H1 (cell line): ENCODE measurements at regions of chr5 and their contacts with region 1.

Region 1: DNA sequence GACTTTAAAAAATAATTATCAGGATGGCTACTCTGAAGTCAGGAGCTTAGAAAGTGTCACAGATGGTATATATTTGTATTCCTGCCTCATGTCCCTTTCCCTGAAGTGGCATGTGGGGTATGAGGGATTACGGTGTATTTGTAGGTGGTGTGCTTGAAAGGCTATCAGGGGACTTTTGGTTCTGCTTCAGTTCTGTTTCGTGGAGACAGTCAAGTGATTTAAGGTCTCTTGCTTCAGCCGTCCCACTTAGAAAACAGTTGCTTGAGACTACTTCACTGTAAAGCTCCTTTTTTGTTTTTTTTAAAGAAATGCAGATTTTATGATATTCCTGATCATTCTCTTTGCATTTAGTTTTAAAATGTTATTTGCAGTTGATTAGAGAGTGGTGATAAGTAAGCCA is 18.3 kb downstream of the PARP8 start:
- DNase-seq: no peak
- H3K4me3 ChIP-seq: no peak overlapping the region
- H3K27ac ChIP-seq: no peak overlapping the region
- H3K4me1 ChIP-seq: peaks cover 0 to 11% (median 3%) of the 10 kb centered on the region in 4 experiments; a peak in 3 of 7 replicates
- H3K27me3 ChIP-seq: no peaks in the 10 kb centered on the region
- CTCF ChIP-seq: no peak
- EP300 ChIP-seq: no peak
- POLR2A ChIP-seq: no peak
- RAD21 ChIP-seq: no peak

Region 2: GRCh38 chr5:50667653-50668595 is 16.8 kb before region 1 on chr5:
- CTCF ChIA-PET with region 1: no interaction called
- POLR2A ChIA-PET with region 1: interaction called, 10 read pairs
- DNase-seq: peak in 1 of 2 experiments; percentile 36
- H3K4me3 ChIP-seq: peak overlapping the region; percentile 70 to 86 (median 79)
- H3K27ac ChIP-seq: peak overlapping the region; percentile 97
- H3K4me1 ChIP-seq: peaks cover 0 to 9% (median 6%) of the 10 kb centered on the region in 4 experiments; a peak in 3 of 7 replicates
- H3K27me3 ChIP-seq: no peaks in the 10 kb centered on the region
- CTCF ChIP-seq: no peak
- EP300 ChIP-seq: peak in 1 of 2 experiments; percentile 70; a peak in 1 of 3 replicates
- POLR2A ChIP-seq: peak; percentile 64 to 75
- RAD21 ChIP-seq: no peak

Region 3: DNA sequence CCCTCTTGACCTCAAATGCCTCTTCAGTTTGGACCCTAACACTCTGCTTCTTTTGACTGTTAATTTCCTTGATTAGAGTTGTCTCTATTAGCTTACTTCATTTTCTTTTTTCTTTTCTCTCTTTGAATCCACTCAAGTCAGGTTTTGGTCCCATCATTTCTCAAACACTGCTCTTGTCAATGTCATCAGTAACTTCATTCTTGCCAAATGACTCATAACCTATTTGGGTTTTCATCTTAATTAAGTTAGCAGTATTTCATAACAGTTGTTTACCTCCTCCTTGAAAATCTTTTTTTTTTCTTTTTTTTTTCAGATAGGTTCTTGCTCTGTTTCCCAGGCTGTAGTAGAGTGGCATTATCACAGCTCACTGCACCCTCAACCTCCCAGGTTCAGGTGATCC is 101.4 kb after region 1 on chr5:
- CTCF ChIA-PET with region 1: no interaction called
- POLR2A ChIA-PET with region 1: no interaction called
- DNase-seq: no peak
- H3K4me3 ChIP-seq: no peak overlapping the region
- H3K27ac ChIP-seq: no peak overlapping the region
- H3K4me1 ChIP-seq: no peaks in the 10 kb centered on the region
- H3K27me3 ChIP-seq: no peaks in the 10 kb centered on the region
- CTCF ChIP-seq: no peak
- EP300 ChIP-seq: no peak
- POLR2A ChIP-seq: no peak
- RAD21 ChIP-seq: no peak